ENCODE measurements at regions of chr10 and their contacts with region 1.

Region 1: GRCh38 chr10:22230158-22230833 is 12.5 kb upstream of the EBLN1 start:
- DNase-seq: peak in 1 of 2 donors; percentile 84
- H3K4me3 ChIP-seq: peak overlapping the region; percentile 56 to 69 (median 66)
- H3K27ac ChIP-seq: peak overlapping the region in 4 of 5 donors; percentile 88 to 94 (median 91)
- H3K4me1 ChIP-seq: peaks cover 0 to 12% (median 3%) of the 10 kb centered on the region in 4 donors
- H3K27me3 ChIP-seq: peaks cover 0 to 3% (median 0%) of the 10 kb centered on the region in 3 donors
- CTCF ChIP-seq: no peak
- EP300 ChIP-seq: no peak
- POLR2A ChIP-seq: no peak

Region 2: GRCh38 chr10:22010973-22011408 is 219.3 kb before region 1 on chr10:
- intact Hi-C with region 1: loop called (anchors 10 kb)
- DNase-seq: peak in 1 of 2 donors; percentile 36
- H3K4me3 ChIP-seq: no peak overlapping the region
- H3K27ac ChIP-seq: no peak overlapping the region
- H3K4me1 ChIP-seq: peaks cover 0 to 7% (median 0%) of the 10 kb centered on the region in 4 donors
- H3K27me3 ChIP-seq: no peaks in the 10 kb centered on the region
- CTCF ChIP-seq: peak in 3 of 7 experiments; percentile 20 to 78 (median 38)
- EP300 ChIP-seq: no peak
- POLR2A ChIP-seq: no peak

Region 3: GRCh38 chr10:22464966-22465629 is 234.8 kb after region 1 on chr10:
- intact Hi-C with region 1: no loop called
- DNase-seq: no peak
- H3K4me3 ChIP-seq: no peak overlapping the region
- H3K27ac ChIP-seq: no peak overlapping the region
- H3K4me1 ChIP-seq: peaks cover 0 to 8% (median 2%) of the 10 kb centered on the region in 4 donors
- H3K27me3 ChIP-seq: no peaks in the 10 kb centered on the region
- CTCF ChIP-seq: no peak
- EP300 ChIP-seq: no peak
- POLR2A ChIP-seq: no peak

Measured in stomach (tissue), 19 donors.